Panc1 (cell line): ENCODE measurements at regions of chr6 and their contacts with region 1.

Region 1: GRCh38 chr6:39361657-39362486 is 39.4 kb upstream of the KCNK16 start:
- DNase-seq: peak; percentile 38
- ATAC-seq: peak; percentile 93
- H3K4me3 ChIP-seq: no peak overlapping the region
- H3K27ac ChIP-seq: no peak overlapping the region
- H3K4me1 ChIP-seq: no peaks in the 10 kb centered on the region
- H3K27me3 ChIP-seq: no peaks in the 10 kb centered on the region; the same call in 1 of the 2 replicates
- CTCF ChIP-seq: peak; percentile 91

Region 2: DNA sequence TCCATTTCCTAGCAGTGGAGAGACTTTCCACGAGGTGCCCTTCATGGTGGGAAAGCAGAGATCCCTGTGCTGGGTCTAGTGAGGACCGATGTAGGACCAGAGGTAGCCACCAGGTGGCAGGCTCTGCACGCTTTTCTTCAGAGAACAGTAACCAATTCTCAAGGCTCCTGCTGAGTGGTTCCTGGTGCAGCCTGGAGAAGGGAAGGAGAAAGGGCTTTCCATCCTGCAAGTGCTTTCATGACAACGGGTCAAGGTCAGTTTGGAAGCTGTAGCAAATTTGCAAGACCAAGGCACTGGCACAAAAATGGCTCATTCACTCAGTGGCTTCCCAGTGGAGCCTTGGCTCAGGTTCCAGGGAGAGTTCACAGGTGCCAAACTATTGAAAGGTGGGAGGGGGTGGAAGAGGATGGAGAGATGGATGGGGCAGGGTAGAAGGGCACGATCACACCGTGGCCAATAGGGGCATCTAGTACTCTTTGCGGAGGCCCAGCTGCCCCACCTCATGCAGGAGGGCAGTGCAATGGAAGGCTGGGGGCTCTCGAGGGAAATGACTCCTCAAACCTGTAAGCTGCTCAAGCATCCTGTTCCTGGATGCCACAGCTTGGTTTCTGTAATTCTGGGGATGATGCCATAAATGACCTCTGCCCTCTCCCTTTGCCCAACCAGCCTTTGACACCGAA is 13.8 kb before region 1 on chr6:
- CTCF ChIA-PET with region 1: interaction called, 11 read pairs
- POLR2A ChIA-PET with region 1: no interaction called
- in situ Hi-C with region 1: no loop called
- intact Hi-C with region 1: no loop called
- DNase-seq: peak; percentile 51
- ATAC-seq: peak; percentile 85
- H3K4me3 ChIP-seq: no peak overlapping the region
- H3K27ac ChIP-seq: no peak overlapping the region
- H3K4me1 ChIP-seq: no peaks in the 10 kb centered on the region
- H3K27me3 ChIP-seq: no peaks in the 10 kb centered on the region
- CTCF ChIP-seq: peak; percentile 92

Region 3: GRCh38 chr6:39897698-39898097 is 535.8 kb after region 1 on chr6:
- CTCF ChIA-PET with region 1: no interaction called
- POLR2A ChIA-PET with region 1: no interaction called
- in situ Hi-C with region 1: no loop called
- intact Hi-C with region 1: loop called (anchors 5 kb)
- DNase-seq: no peak
- ATAC-seq: no peak
- H3K4me3 ChIP-seq: no peak overlapping the region
- H3K27ac ChIP-seq: no peak overlapping the region
- H3K4me1 ChIP-seq: no peaks in the 10 kb centered on the region
- H3K27me3 ChIP-seq: no peaks in the 10 kb centered on the region; the same call in 1 of the 2 replicates
- CTCF ChIP-seq: no peak